ENCODE measurements at regions of chr6 and their contacts with region 1.

Region 1: GRCh38 chr6:125507987-125508655 is 206.4 kb upstream of the HDDC2 start:
- DNase-seq: no peak
- ATAC-seq: no peak

Region 2: DNA sequence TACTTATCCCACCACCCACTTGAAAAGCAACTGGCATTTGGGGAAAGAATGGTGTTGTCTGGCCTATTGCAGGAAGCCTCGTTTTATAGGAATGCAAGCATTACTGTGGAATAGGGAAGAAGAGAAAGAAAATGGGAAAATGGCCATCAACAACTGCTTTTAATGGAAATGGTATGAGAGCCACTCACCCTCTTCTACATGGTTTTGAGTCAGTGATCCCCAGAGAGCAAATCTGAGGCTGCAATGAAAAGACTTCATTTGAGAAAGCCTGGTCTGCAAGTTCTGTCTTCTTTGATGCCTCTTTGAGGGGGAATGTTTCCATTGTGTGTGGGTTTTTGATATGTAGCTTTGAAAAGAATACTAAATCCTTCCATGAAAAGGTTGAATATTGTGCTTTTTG is 34.1 kb before region 1 on chr6:
- intact Hi-C with region 1: loop called (anchors 1 kb)
- DNase-seq: no peak
- ATAC-seq: no peak